Activated CD4-positive, alpha-beta memory T cell treated with anti-CD3 and anti-CD28 coated beads, Interleukin-2, amount 10 ng/mL, durations not matched to agents 7 days and 5 days (primary cell): ENCODE measurements at regions of chr18 and their contacts with region 1.

Region 1: DNA sequence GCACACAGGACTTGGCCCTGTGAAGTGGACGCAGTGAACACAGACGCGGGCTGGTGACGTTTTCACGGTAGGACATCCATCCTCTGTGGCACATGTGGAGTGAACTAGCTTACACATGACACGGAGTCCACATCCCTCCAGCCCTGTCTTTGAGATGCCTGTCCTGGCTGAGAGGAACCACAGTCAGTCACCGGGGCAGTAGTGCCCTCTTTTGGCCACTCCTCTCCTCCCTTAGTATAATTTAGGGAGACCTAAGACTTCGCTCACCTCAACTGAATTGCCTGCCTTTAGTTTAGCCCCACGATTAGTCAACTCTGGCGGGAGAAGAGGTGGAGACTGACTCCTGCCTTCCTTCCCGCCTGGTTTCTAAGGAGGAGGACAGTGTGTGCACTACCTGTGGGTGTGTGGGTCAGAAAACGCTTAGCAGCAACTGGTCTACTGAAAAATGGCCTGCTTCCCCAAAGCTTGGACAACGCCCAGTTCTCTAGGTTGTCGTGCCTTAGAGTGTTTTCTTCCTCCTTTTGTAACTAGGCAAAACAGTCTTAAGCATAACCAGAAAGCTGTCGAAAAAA is 70.6 kb downstream of the MBP start:
- DNase-seq: peak; percentile 48
- H3K4me3 Mint-ChIP-seq: peak overlapping the region; percentile 66
- H3K27ac Mint-ChIP-seq: peak overlapping the region; percentile 99
- H3K4me1 Mint-ChIP-seq: peaks cover 89% of the 10 kb centered on the region
- H3K27me3 Mint-ChIP-seq: no peaks in the 10 kb centered on the region

Region 2: DNA sequence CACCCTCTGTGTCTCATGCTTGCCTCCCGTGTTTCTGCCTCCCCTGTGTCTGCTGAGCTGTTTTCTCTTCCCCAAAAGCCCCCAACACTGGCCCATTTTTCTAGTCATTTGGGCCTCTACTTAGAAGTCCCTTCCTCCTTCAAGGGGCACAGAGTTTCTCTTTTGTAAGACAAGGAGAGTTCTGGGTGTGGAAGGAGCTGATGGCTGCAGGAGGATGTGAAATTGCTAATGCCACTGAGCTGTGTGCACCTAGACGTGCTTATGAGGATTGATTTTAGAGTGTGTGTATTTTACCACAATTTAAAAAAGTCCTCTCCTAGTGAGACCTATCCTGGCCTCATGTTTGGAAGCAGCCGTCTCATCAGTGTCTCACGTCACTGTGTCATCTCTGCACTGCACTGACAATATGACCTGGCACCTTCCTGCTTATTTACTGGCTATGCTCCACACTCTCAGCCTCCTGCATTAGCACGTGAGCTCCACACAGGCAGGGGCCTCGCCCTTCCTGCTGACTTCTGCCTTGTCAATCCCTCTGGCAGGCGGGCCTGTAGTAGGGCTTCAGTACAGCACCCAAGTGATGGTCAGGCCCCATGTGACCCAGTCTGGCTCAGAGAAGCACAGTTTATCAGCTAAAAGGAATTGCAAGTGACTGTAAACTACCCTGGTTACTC is 78.5 kb after region 1 on chr18:
- CTCF ChIA-PET with region 1: interaction called, 4 read pairs
- POLR2A ChIA-PET with region 1: interaction called, 326 read pairs
- DNase-seq: peak; percentile 76
- H3K4me3 Mint-ChIP-seq: no peak overlapping the region
- H3K27ac Mint-ChIP-seq: peak overlapping the region; percentile 75
- H3K4me1 Mint-ChIP-seq: peaks cover 45% of the 10 kb centered on the region
- H3K27me3 Mint-ChIP-seq: no peaks in the 10 kb centered on the region

Region 3: DNA sequence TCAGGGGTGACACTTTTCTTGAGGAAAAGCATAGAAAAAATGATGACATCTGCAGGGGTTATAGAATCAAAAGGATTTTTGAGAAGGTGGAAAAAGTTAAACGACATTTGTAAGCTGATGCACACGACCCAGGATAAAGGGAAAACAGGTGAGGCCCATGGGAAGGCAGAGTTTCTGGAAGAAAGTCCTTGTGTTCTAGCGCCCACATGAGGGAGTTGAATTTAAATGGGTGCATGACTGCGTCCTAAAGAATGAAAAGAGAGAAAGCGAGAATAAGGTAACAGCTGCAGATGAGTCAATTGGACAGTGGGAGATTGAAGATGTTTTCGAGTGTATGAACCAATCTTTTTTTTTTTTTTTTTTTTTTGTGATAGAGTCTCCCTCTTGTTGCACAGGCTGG is 345.7 kb after region 1 on chr18:
- CTCF ChIA-PET with region 1: no interaction called
- POLR2A ChIA-PET with region 1: no interaction called
- DNase-seq: no peak
- H3K4me3 Mint-ChIP-seq: no peak overlapping the region
- H3K27ac Mint-ChIP-seq: no peak overlapping the region
- H3K4me1 Mint-ChIP-seq: no peaks in the 10 kb centered on the region
- H3K27me3 Mint-ChIP-seq: peaks cover 1% of the 10 kb centered on the region